ENCODE measurements at regions of chr4 and their contacts with region 1.

Region 1: DNA sequence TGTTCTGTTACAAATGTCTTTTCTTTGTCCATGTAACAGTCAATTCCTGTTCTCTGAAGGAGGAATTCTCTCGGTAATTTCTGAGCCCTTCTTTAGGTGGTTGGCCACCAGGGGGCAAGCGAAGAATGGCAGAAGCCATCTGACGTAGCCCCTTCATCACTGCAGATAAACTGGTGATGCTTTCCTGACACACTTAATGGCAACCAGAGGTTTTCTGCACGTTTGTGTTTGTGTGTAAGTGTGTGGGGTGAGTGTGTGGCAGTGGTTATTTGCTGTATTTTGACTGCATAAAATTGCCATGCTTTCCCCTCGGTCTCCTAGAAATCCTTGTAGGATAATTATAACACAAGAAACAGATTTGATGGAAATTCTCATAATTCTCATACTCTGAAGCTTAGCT is 64.8 kb upstream of the STOX2 start:
- DNase-seq: peak in 1 of 2 donors; percentile 87
- H3K4me3 ChIP-seq: no peak overlapping the region
- H3K27ac ChIP-seq: no peak overlapping the region
- H3K4me1 ChIP-seq: no peaks in the 10 kb centered on the region
- H3K27me3 ChIP-seq: no peaks in the 10 kb centered on the region
- CTCF ChIP-seq: peak; percentile 60 to 90 (median 64)

Region 2: DNA sequence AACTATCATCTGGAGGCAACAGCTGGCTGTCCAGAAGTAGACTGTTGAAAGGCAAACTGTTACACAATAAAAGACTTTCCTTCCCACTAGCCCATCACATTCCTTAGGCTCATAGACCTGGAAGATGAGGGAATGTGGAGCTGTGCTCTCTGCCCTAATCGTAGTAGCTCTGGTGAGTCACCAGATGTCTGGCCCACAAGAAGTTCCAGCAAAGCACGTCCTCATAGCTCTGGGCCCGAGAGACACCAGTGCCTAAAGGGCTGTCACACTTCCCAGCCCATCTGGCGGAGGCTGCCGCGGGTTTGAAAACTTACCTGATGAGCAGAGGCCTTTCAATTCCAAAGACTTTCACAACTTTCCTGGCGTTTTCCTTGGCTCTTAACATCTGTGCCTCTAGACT is 16.9 kb before region 1 on chr4:
- intact Hi-C with region 1: no loop called
- DNase-seq: no peak
- H3K4me3 ChIP-seq: no peak overlapping the region
- H3K27ac ChIP-seq: no peak overlapping the region
- H3K4me1 ChIP-seq: peaks cover 0 to 3% of the 10 kb centered on the region in 2 donors
- H3K27me3 ChIP-seq: no peaks in the 10 kb centered on the region
- CTCF ChIP-seq: no peak

Region 3: DNA sequence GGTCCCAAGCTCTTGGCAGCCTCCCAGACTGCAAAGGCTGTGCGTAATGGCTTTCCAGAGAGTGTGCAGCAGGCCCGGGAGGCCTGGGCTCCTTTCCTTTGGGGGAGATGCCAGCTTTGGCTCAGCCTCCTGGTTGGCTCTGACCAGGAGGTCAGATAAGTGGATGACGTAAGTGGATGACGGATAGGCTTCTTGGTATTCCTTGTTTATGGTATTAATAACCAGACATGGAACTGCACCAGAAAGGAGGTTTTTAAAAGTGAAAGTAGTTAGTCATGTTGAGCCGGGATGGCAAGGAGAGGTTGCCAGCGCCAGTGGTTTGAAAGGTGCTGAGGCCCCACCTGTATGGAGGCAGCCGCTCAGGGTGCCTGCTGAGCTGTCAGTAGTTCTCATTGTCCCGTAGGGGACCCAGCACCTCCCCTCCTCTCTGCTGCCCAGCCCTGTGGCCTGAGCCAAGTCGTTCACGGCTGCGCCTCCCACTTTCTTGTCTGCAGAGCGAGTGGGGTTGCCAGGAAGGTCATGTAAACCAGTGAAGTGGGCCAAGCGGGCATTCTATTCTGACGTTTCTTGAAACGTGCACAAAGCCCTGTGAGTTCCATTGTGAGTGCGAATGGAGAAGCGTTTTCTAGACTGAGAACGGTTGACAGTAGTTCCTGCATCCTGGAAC is 36.1 kb after region 1 on chr4:
- intact Hi-C with region 1: loop called (anchors 1 kb)
- DNase-seq: peak; percentile 62 to 90
- H3K4me3 ChIP-seq: peak overlapping the region; percentile 63
- H3K27ac ChIP-seq: peak overlapping the region; percentile 72 to 77
- H3K4me1 ChIP-seq: peaks cover 0 to 9% of the 10 kb centered on the region in 2 donors
- H3K27me3 ChIP-seq: no peaks in the 10 kb centered on the region
- CTCF ChIP-seq: no peak

Region 4: GRCh38 chr4:183905081-183905592 is 64.8 kb after region 1 on chr4 and contains the start of gene STOX2:
- intact Hi-C with region 1: loop called (anchors 2 kb)
- DNase-seq: peak; percentile 25 to 81
- H3K4me3 ChIP-seq: peak within 1 kb of the TSS; percentile 58 to 76
- H3K27ac ChIP-seq: peak within 1 kb of the TSS; percentile 48 to 60
- H3K4me1 ChIP-seq: no peaks in the 10 kb centered on the region
- H3K27me3 ChIP-seq: no peaks in the 10 kb centered on the region
- CTCF ChIP-seq: no peak
- total RNA-seq, gene STOX2: 41.7 TPM

Region 5: DNA sequence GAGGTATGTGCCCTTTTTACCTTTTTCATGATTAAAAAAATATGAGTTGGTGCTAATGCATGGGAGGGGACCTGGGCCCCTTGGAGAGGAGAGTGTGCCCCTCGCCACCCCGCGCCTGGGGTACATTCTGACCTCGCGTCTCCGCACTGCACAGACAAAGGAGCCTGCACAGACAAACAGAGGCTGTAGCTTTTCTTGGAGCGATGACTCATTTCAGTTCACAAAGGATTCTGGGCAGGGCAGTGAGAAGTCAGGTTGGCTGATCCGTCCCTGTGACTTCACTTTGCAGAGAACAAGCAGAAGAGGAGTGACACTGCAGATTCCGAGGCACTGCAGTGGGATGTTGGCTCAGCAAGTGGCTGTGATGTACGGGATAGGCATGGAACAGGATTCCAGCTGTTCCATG is 147.7 kb after region 1 on chr4:
- intact Hi-C with region 1: loop called (anchors 5 kb)
- DNase-seq: peak; percentile 54 to 87
- H3K4me3 ChIP-seq: peak overlapping the region; percentile 51 to 54
- H3K27ac ChIP-seq: peak overlapping the region; percentile 52 to 77
- H3K4me1 ChIP-seq: peaks cover 0 to 13% of the 10 kb centered on the region in 2 donors
- H3K27me3 ChIP-seq: no peaks in the 10 kb centered on the region
- CTCF ChIP-seq: no peak

Region 6: DNA sequence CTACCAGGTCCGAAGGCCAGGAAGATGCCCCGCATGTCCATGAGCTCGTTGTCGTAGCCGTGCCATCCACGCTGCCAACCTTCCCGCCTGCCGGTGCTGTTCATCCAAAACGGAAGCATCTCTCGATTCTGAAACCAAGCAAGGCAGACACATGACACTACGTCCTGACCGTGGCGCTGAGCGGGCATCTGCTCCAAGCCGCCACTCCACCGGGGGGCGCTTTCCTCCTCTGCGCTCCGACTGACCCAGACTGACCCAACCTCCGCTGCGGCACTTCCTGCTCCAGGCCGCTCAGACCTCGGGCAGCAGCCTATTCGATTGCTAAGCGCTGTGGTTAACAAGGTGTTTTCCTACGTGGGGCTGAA is 256.9 kb after region 1 on chr4:
- intact Hi-C with region 1: loop called (anchors 2 kb)
- DNase-seq: peak in 1 of 2 donors; percentile 76
- H3K4me3 ChIP-seq: peak overlapping the region; percentile 37 to 59
- H3K27ac ChIP-seq: no peak overlapping the region
- H3K4me1 ChIP-seq: no peaks in the 10 kb centered on the region
- H3K27me3 ChIP-seq: no peaks in the 10 kb centered on the region
- CTCF ChIP-seq: peak; percentile 14 to 47 (median 18)

Region 7: DNA sequence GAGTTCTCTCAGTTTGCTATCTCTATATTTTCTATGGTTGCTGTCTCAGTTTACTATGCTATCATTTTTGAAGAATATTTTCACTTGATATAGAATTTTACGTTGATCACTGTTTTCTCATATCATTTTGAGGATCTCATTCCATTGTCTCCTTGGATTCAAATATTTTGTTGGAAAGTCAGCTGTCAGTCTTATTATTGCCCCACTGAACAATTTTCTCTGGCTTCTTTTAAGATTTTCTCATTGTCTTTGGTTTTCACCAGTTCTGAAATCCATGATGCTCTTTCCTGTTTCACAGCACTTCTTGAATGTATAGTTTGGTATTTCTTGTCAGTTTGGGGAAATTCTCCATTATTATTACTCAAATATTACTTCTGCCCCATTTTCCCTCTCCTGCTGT is 296.2 kb after region 1 on chr4:
- intact Hi-C with region 1: no loop called
- DNase-seq: no peak
- H3K4me3 ChIP-seq: no peak overlapping the region
- H3K27ac ChIP-seq: no peak overlapping the region
- H3K4me1 ChIP-seq: no peaks in the 10 kb centered on the region
- H3K27me3 ChIP-seq: no peaks in the 10 kb centered on the region
- CTCF ChIP-seq: no peak

Region 8: GRCh38 chr4:184168406-184169019 is 328.2 kb after region 1 on chr4:
- intact Hi-C with region 1: loop called (anchors 1 kb)
- DNase-seq: peak in 1 of 2 donors; percentile 84
- H3K4me3 ChIP-seq: no peak overlapping the region
- H3K27ac ChIP-seq: no peak overlapping the region
- H3K4me1 ChIP-seq: no peaks in the 10 kb centered on the region
- H3K27me3 ChIP-seq: no peaks in the 10 kb centered on the region
- CTCF ChIP-seq: peak; percentile 89 to 97 (median 93)

Measured in ascending aorta (tissue), 2 donors.